ENCODE measurements at regions of chrX and their contacts with region 1.

Region 1: GRCh38 chrX:23012162-23012561 is 12.4 kb downstream of the DDX53 start:
- DNase-seq: no peak
- H3K4me3 ChIP-seq: no peak overlapping the region
- H3K27ac ChIP-seq: no peak overlapping the region
- H3K4me1 ChIP-seq: no peaks in the 10 kb centered on the region
- H3K27me3 ChIP-seq: no peaks in the 10 kb centered on the region
- CTCF ChIP-seq: no peak

Region 2: DNA sequence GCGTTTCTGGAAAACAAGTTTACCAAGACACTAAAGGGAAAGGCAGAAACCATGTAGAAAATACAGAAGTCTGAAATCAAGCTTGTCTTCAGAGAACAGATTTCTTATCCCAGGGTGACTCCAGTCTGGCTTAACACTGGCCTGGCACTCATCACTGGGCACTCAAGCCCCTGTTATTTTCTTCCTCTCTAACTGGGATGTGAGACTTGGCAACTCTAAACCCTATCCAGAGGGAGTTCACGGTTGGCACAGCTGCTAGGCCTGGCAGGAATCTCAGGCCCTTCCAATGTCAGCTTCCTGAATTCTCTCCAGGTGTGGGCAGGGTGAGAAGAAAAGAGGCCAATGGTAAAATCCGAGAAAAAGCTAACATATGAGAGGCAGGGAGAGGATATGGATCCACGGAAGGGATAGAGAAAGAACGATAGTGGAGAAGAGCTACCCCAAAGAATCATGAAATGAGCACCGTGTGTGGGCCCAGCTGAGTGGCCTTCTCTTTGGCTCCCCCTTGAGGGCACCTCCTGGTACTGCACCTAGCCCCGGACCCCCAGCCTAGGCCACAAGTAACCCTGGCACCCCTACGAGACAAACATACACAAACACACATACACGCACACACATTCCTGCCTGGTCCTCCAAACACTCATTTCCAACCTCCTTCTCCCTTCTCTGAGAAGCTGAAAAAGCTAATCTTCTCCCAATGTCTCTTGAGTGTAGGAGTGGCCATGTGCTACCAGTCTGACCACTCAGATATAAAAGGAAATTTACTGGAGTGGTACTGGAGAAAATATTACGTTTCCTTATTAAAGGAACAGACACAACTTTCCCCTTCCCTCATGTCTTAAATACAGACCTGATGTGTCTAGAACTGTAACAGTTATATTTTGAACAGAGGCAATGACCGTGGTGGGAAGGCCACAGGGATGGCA is 305.9 kb after region 1 on chrX:
- CTCF ChIA-PET with region 1: no interaction called
- POLR2A ChIA-PET with region 1: no interaction called
- intact Hi-C with region 1: loop called (anchors 10 kb)
- DNase-seq: peak; percentile 51
- H3K4me3 ChIP-seq: no peak overlapping the region
- H3K27ac ChIP-seq: no peak overlapping the region
- H3K4me1 ChIP-seq: no peaks in the 10 kb centered on the region
- H3K27me3 ChIP-seq: no peaks in the 10 kb centered on the region
- CTCF ChIP-seq: peak; percentile 92

Measured in A673 (cell line).